Gastrocnemius medialis (tissue), 4 donors: ENCODE measurements at regions of chr7 and their contacts with region 1.

Region 1: GRCh38 chr7:143287935-143288826 is at the start of gene CASP2:
- DNase-seq: peak; percentile 94
- ATAC-seq: peak; percentile 89
- H3K4me3 ChIP-seq: peak within 1 kb of the TSS; percentile 79 to 93 (median 86)
- H3K27ac ChIP-seq: peak within 1 kb of the TSS; percentile 74 to 91 (median 88)
- H3K4me1 ChIP-seq: peaks cover 25 to 26% of the 10 kb centered on the region in 2 donors
- H3K27me3 ChIP-seq: no peaks in the 10 kb centered on the region
- CTCF ChIP-seq: peak in 3 of 5 experiments; percentile 7 to 50 (median 47)
- POLR2A ChIP-seq: peak; percentile 40 to 64
- total RNA-seq, gene CASP2: 3.1 to 13.9 (median 4.1) TPM

Region 2: GRCh38 chr7:142711746-142712619 is 576.2 kb before region 1 on chr7:
- in situ Hi-C with region 1: no loop called
- intact Hi-C with region 1: no loop called
- DNase-seq: no peak
- ATAC-seq: no peak
- H3K4me3 ChIP-seq: no peak overlapping the region
- H3K27ac ChIP-seq: no peak overlapping the region
- H3K4me1 ChIP-seq: peaks cover 7 to 8% of the 10 kb centered on the region in 2 donors
- H3K27me3 ChIP-seq: no peaks in the 10 kb centered on the region
- CTCF ChIP-seq: peak; percentile 35 to 61 (median 41)
- POLR2A ChIP-seq: no peak

Region 3: GRCh38 chr7:143318656-143319055 is 30.5 kb after region 1 on chr7:
- in situ Hi-C with region 1: no loop called
- intact Hi-C with region 1: loop called (anchors 1 kb)
- DNase-seq: peak; percentile 67 to 87
- ATAC-seq: peak; percentile 73 to 85
- H3K4me3 ChIP-seq: no peak overlapping the region
- H3K27ac ChIP-seq: peak overlapping the region; percentile 76 to 99 (median 90)
- H3K4me1 ChIP-seq: peaks cover 44 to 59% of the 10 kb centered on the region in 2 donors
- H3K27me3 ChIP-seq: no peaks in the 10 kb centered on the region
- CTCF ChIP-seq: peak in 3 of 5 experiments; percentile 12 to 36 (median 24)
- POLR2A ChIP-seq: no peak

Region 4: DNA sequence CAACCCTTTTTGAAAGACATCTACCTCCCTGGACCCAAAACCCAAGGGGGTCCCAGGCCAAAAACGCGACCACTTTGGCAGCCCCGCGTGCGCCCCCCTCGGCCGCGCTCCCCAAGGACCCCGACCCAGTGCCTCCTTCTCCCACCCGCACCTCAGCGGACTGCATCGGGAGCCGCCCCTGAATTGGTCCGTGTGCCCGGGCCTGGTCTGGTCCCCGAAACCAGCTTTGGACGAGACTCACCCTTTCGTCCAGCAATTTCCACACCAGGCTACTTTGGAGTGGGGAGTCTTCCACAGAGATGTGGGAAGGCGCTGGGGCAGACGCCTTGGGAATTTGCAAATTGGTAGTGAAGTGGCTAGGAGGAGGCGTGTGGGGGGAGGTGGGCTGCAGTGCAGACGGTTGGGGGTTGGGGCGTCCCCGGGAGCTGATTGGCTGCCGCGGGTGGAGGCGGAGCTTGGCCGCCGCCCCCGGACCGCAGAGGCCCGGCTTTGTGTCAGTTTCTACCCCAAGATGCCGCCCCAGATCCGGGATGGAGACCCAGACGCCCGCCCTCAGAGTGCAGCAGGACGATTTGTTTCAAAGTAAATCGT is 596.9 kb after region 1 on chr7:
- in situ Hi-C with region 1: loop called in 1 of 4 experiments (anchors 25 kb)
- intact Hi-C with region 1: no loop called
- DNase-seq: no peak
- ATAC-seq: no peak
- H3K4me3 ChIP-seq: peak overlapping the region; percentile 37 to 52 (median 44)
- H3K27ac ChIP-seq: no peak overlapping the region
- H3K4me1 ChIP-seq: peaks cover 10 to 16% of the 10 kb centered on the region in 2 donors
- H3K27me3 ChIP-seq: peaks cover 0 to 4% (median 0%) of the 10 kb centered on the region in 3 donors
- CTCF ChIP-seq: no peak
- POLR2A ChIP-seq: no peak